ENCODE measurements at regions of chr1 and their contacts with region 1.

Region 1: GRCh38 chr1:42924082-42924850 is 34.4 kb downstream of the SLC2A1 start:
- DNase-seq: peak; percentile 95
- H3K4me3 Mint-ChIP-seq: peak overlapping the region; percentile 89
- H3K27ac Mint-ChIP-seq: peak overlapping the region; percentile 97
- H3K4me1 Mint-ChIP-seq: peaks cover 22% of the 10 kb centered on the region
- H3K27me3 Mint-ChIP-seq: no peaks in the 10 kb centered on the region

Region 2: GRCh38 chr1:42777852-42778251 is 146.4 kb before region 1 on chr1:
- CTCF ChIA-PET with region 1: interaction called, 21 read pairs
- POLR2A ChIA-PET with region 1: no interaction called
- intact Hi-C with region 1: no loop called
- DNase-seq: peak; percentile 41
- H3K4me3 Mint-ChIP-seq: no peak overlapping the region
- H3K27ac Mint-ChIP-seq: no peak overlapping the region
- H3K4me1 Mint-ChIP-seq: peaks cover 20% of the 10 kb centered on the region
- H3K27me3 Mint-ChIP-seq: no peaks in the 10 kb centered on the region

Region 3: GRCh38 chr1:42846257-42847110 is 77.8 kb before region 1 on chr1 and contains the start of gene ZNF691:
- CTCF ChIA-PET with region 1: interaction called, 26 read pairs
- POLR2A ChIA-PET with region 1: no interaction called
- intact Hi-C with region 1: loop called (anchors 5 kb)
- DNase-seq: peak; percentile 94
- H3K4me3 Mint-ChIP-seq: peak within 1 kb of the TSS; percentile 89
- H3K27ac Mint-ChIP-seq: peak within 1 kb of the TSS; percentile 72
- H3K4me1 Mint-ChIP-seq: peaks cover 44% of the 10 kb centered on the region
- H3K27me3 Mint-ChIP-seq: no peaks in the 10 kb centered on the region
- total RNA-seq, gene ZNF691: 8.6 to 9.5 TPM

Region 4: GRCh38 chr1:42893096-42893495 is 31.2 kb before region 1 on chr1:
- CTCF ChIA-PET with region 1: no interaction called
- POLR2A ChIA-PET with region 1: no interaction called
- intact Hi-C with region 1: no loop called
- DNase-seq: no peak
- H3K4me3 Mint-ChIP-seq: no peak overlapping the region
- H3K27ac Mint-ChIP-seq: no peak overlapping the region
- H3K4me1 Mint-ChIP-seq: no peaks in the 10 kb centered on the region
- H3K27me3 Mint-ChIP-seq: peaks cover 14% of the 10 kb centered on the region

Region 5: GRCh38 chr1:42936309-42937078 is 12.2 kb after region 1 on chr1:
- CTCF ChIA-PET with region 1: interaction called, 39 read pairs
- POLR2A ChIA-PET with region 1: interaction called, 6 read pairs
- intact Hi-C with region 1: loop called (anchors 1 kb)
- DNase-seq: peak; percentile 68
- H3K4me3 Mint-ChIP-seq: peak overlapping the region; percentile 5
- H3K27ac Mint-ChIP-seq: peak overlapping the region; percentile 95
- H3K4me1 Mint-ChIP-seq: peaks cover 97% of the 10 kb centered on the region
- H3K27me3 Mint-ChIP-seq: no peaks in the 10 kb centered on the region

Region 6: GRCh38 chr1:42958488-42959319 is 34.4 kb after region 1 on chr1 and contains the start of gene SLC2A1:
- CTCF ChIA-PET with region 1: interaction called, 9 read pairs
- POLR2A ChIA-PET with region 1: interaction called, 7 read pairs
- intact Hi-C with region 1: loop called (anchors 2 kb)
- DNase-seq: peak; percentile 98
- H3K4me3 Mint-ChIP-seq: peak within 1 kb of the TSS; percentile 94
- H3K27ac Mint-ChIP-seq: peak within 1 kb of the TSS; percentile 98
- H3K4me1 Mint-ChIP-seq: peaks cover 49% of the 10 kb centered on the region
- H3K27me3 Mint-ChIP-seq: peaks cover 2% of the 10 kb centered on the region
- total RNA-seq, gene SLC2A1: 67.6 to 73.6 TPM

Region 7: DNA sequence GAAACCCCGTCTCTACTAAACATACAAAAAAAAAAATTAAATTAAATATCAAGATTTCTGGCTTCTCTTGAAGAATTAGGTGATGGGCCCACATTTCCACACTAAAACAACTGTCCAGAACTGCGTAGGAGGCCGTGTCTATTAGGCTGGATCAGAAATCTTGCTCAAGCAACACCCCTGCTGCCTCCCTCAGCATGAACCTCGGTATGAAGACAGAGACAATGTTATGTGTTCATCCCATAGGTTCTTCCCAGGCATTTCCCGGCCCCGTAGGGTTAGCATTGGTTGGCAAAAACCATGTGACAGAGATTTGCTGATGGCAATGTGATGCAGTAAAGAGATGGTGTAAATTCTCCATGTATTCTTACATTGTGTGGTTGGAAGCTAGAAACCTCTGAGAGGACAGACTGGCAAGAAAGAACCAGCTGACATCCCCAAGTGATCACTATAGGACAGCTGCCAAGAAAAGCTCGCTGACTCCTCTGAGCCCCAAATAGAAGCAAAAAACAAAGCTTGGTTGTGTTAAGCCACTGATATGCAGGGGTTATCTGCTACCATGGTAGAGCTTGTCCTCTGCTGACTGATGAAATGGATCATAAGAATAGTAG is 213.3 kb after region 1 on chr1:
- CTCF ChIA-PET with region 1: no interaction called
- POLR2A ChIA-PET with region 1: no interaction called
- intact Hi-C with region 1: no loop called
- DNase-seq: no peak
- H3K4me3 Mint-ChIP-seq: no peak overlapping the region
- H3K27ac Mint-ChIP-seq: no peak overlapping the region
- H3K4me1 Mint-ChIP-seq: no peaks in the 10 kb centered on the region
- H3K27me3 Mint-ChIP-seq: peaks cover 25% of the 10 kb centered on the region

Region 8: DNA sequence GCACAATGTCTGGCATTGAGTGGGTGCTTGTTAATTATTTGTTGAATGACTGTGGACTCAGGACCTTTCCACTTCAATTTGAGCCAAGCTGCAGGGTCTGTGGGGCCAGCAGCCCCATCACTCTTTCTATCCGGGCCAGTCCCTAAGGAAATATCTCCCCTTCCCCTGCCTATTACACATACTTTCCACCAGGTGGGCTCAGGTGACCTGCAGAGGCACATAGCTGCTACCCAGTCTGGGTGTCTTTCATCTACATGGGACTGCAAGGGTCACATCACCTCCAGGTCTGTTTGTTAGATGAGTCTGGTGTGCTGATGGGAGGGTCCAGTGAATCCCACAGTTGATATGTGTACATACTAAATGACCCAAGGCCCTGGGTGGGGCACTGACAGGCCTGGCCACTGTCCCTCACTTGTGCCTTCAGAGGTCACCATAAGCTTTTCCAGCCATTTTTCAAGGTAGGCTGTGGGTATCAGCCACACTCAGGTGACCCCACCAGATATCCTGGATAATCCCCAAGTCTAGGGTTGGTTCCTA is 666.2 kb after region 1 on chr1:
- CTCF ChIA-PET with region 1: no interaction called
- POLR2A ChIA-PET with region 1: no interaction called
- intact Hi-C with region 1: no loop called
- DNase-seq: no peak
- H3K4me3 Mint-ChIP-seq: no peak overlapping the region
- H3K27ac Mint-ChIP-seq: no peak overlapping the region
- H3K4me1 Mint-ChIP-seq: no peaks in the 10 kb centered on the region
- H3K27me3 Mint-ChIP-seq: no peaks in the 10 kb centered on the region

Measured in activated CD4-positive, alpha-beta memory T cell treated with anti-CD3 and anti-CD28 coated beads for 36 hours (primary cell).